ENCODE measurements at regions of chr7 and their contacts with region 1.

Region 1: GRCh38 chr7:18520450-18521235 is 25.1 kb downstream of the HDAC9 start:
- DNase-seq: no peak
- ATAC-seq: peak in 6 of 8 donors; percentile 53 to 83 (median 66)
- H3K4me3 ChIP-seq: peak overlapping the region in 4 of 10 donors; percentile 3 to 11 (median 6)
- H3K27ac ChIP-seq: peak overlapping the region in 9 of 10 donors; percentile 5 to 67 (median 54)
- H3K4me1 ChIP-seq: peaks cover 0 to 29% (median 13%) of the 10 kb centered on the region in 9 donors
- H3K27me3 ChIP-seq: no peaks in the 10 kb centered on the region
- CTCF ChIP-seq: no peak

Region 2: GRCh38 chr7:18489624-18490023 is 31.0 kb before region 1 on chr7:
- intact Hi-C with region 1: loop called in 1 of 10 experiments (anchors 1 kb)
- DNase-seq: no peak
- ATAC-seq: no peak
- H3K4me3 ChIP-seq: no peak overlapping the region
- H3K27ac ChIP-seq: no peak overlapping the region
- H3K4me1 ChIP-seq: peaks cover 0 to 14% (median 5%) of the 10 kb centered on the region in 9 donors
- H3K27me3 ChIP-seq: no peaks in the 10 kb centered on the region
- CTCF ChIP-seq: no peak

Region 3: DNA sequence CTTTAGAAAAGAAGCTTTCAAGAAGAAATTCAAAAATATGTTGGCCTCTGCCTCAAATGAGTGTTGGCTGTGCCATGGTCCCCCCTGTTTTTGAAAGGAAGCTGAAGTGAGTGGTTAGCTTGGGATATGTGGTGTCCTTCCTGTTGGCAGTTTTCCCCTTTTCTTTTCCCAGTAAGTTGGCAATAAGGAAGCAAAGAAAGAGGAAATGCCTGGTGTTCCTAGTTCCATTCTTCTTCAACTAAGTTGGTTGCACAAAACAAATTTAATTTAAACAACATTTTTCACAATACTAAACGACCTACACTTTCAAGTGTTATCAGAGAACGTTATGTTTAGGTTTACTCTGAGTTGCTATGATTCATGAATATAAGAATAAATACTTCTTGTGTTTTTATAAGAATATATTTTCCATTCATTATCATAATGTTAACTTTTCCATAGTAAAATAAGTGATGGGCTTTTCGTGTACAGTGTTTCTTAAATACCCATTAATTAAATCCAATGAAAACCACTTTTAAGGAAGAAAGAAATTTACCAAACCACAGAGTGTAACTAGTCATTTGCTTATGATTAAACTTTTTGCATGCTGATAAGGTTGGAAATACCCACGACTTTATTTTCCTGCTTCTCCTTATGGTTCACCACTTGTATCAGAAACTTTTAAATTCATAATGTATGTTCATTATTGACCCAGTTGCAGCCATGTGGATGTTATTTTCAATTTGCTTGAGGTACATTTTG is 17.3 kb before region 1 on chr7:
- intact Hi-C with region 1: loop called in 1 of 10 experiments (anchors 2 kb)
- DNase-seq: no peak
- ATAC-seq: no peak
- H3K4me3 ChIP-seq: no peak overlapping the region
- H3K27ac ChIP-seq: peak overlapping the region in 1 of 10 donors; percentile 23
- H3K4me1 ChIP-seq: peaks cover 0 to 73% (median 30%) of the 10 kb centered on the region in 9 donors
- H3K27me3 ChIP-seq: no peaks in the 10 kb centered on the region
- CTCF ChIP-seq: no peak

Region 4: GRCh38 chr7:18538554-18539250 is 18.1 kb after region 1 on chr7:
- intact Hi-C with region 1: loop called in 1 of 10 experiments (anchors 2 kb)
- DNase-seq: no peak
- ATAC-seq: no peak
- H3K4me3 ChIP-seq: no peak overlapping the region
- H3K27ac ChIP-seq: no peak overlapping the region
- H3K4me1 ChIP-seq: peaks cover 0 to 64% (median 26%) of the 10 kb centered on the region in 9 donors
- H3K27me3 ChIP-seq: no peaks in the 10 kb centered on the region
- CTCF ChIP-seq: no peak

Measured in heart right ventricle (tissue), 16 donors.